ENCODE measurements at regions of chr13 and their contacts with region 1.

Region 1: GRCh38 chr13:26946684-26947343 is 186.2 kb upstream of the GPR12 start:
- DNase-seq: no peak
- ATAC-seq: peak; percentile 73

Region 2: DNA sequence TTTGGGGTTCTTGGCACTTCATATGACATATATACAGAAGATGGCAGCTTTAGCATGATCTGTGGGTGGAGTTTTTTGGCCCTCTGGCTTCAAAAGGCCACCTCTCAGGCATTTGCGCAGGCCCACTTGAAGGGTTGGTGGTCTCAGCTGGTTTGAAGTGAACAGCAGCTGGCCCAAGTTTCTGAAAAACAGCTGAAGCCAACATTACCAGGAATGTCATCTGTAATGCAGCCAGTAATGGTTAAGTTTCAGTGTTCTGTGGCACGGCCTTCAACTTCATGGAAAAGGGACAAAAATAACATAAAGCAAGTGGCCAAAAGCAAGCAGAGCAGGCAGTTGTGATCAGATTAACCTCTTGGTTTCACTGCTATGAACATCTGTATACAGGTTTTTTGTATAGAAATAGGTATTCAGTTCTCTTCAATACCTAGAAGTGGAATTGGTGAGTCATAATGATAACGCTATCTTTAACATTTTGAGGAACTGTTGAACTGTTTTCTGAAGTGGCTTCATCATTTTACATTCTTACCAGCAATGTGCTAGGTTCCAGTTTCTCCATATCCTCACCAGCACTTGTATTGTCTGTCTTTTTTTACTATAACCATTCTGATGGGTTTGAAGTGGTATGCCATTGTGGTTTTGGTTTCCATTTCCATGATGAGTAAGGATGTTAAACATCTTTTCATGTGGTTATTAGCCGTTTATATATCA is 1140.4 kb before region 1 on chr13:
- intact Hi-C with region 1: no loop called
- DNase-seq: no peak
- ATAC-seq: no peak

Region 3: GRCh38 chr13:27053902-27054595 is 107.2 kb after region 1 on chr13:
- intact Hi-C with region 1: no loop called
- DNase-seq: no peak
- ATAC-seq: no peak

Region 4: GRCh38 chr13:27362064-27362883 is 415.5 kb after region 1 on chr13:
- intact Hi-C with region 1: loop called (anchors 5 kb)
- DNase-seq: peak; percentile 93
- ATAC-seq: peak; percentile 95

Measured in left ventricle myocardium superior (tissue), 1 donor.